ENCODE measurements at regions of chr12 and their contacts with region 1.

Region 1: DNA sequence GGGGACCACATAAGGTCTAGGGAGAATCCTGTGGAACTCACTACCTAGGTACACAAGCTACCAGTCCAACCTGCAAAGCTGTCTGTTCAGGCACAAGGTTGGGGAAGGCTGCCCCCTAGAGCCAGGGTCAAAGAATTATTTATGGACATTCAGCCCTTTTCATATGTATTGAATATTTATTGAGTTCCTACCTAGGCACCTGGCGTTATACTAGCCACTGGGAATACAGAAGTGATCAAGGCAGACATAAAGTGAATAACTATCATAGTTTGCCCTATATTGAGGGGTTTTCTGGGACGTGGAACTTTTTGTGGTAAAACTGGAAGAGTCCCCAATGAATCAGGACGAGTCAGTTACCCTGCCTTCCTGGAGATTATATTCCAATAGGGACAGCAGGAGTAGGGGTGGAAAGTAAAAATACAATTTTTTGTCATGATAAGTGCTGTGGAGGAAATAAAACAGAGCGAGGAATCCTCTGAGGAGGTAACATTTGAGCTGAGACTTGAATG is 5.8 kb upstream of the SLC48A1 start:
- DNase-seq: peak in 2 of 7 donors; percentile 57 to 67
- H3K4me3 ChIP-seq: no peak overlapping the region
- H3K27ac ChIP-seq: no peak overlapping the region
- H3K4me1 ChIP-seq: peaks cover 0 to 18% of the 10 kb centered on the region in 2 donors
- H3K27me3 ChIP-seq: no peaks in the 10 kb centered on the region
- CTCF ChIP-seq: peak; percentile 50 to 57 (median 55)
- POLR2A ChIP-seq: no peak

Region 2: DNA sequence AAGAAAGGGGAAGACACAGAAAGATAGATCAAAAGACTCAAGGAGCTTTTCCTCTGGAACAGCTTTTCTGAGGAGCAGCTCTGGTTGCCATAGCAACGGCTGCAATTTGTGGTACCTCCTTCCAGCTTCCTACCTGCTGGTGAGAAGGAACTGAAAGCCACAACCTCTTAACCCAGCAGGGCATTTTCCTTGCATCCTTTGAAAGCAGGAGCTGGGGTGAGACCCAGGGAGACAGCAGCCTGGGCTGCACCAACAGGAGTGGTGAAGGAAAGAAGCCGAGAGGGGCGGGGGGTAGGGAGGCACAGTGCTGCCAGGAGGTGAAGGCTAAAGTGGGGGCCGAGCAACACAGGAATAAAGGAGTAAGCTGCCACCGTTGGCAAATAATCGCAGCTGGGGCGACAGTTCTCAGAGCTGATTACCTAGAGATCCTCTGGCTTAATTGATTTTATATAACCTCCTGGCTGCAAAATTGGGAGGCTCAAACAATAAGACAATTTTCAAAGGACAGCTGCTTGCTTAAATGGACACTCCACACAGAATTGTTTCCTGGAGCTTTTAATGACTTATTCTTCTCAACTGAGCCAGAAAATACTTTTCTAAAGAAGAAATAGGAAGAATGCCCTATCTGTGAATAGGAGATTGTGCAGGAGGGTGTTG is 190.9 kb before region 1 on chr12:
- intact Hi-C with region 1: no loop called
- DNase-seq: no peak
- H3K4me3 ChIP-seq: no peak overlapping the region
- H3K27ac ChIP-seq: no peak overlapping the region
- H3K4me1 ChIP-seq: no peaks in the 10 kb centered on the region
- H3K27me3 ChIP-seq: no peaks in the 10 kb centered on the region
- CTCF ChIP-seq: no peak
- POLR2A ChIP-seq: no peak

Region 3: DNA sequence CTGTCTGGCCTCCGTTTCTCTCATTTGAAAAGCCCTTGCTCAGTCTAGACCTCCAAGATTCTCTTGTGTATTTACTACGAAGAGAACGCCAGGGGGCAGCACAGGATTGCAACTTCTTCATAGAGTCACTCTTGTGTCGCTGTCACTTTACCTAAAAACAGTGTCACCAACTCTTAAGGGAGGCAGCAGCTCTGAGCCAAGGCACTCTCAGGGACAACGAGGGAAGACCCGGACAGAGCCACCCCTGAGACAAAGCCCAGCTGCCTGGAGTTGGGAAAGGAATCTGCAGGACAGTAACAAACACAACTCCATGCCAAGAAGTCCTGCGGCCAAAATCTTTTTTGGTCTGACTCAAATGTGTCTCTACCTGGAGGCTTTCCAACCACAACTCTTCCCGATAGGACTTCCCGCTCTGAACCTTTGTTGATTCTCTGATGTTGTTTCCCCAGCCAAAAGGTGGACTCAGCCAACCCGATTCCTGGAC is 51.8 kb before region 1 on chr12:
- intact Hi-C with region 1: loop called (anchors 5 kb)
- DNase-seq: peak; percentile 80 to 93 (median 86)
- H3K4me3 ChIP-seq: no peak overlapping the region
- H3K27ac ChIP-seq: peak overlapping the region in 3 of 5 donors; percentile 63 to 82 (median 71)
- H3K4me1 ChIP-seq: peaks cover 24 to 37% of the 10 kb centered on the region in 2 donors
- H3K27me3 ChIP-seq: no peaks in the 10 kb centered on the region
- CTCF ChIP-seq: peak; percentile 60 to 93 (median 88)
- POLR2A ChIP-seq: no peak

Region 4: GRCh38 chr12:47721431-47721973 is 45.8 kb before region 1 on chr12:
- intact Hi-C with region 1: loop called in 1 of 2 experiments (anchors 5 kb)
- DNase-seq: peak in 1 of 7 donors; percentile 13
- H3K4me3 ChIP-seq: no peak overlapping the region
- H3K27ac ChIP-seq: no peak overlapping the region
- H3K4me1 ChIP-seq: peaks cover 13 to 19% of the 10 kb centered on the region in 2 donors
- H3K27me3 ChIP-seq: no peaks in the 10 kb centered on the region
- CTCF ChIP-seq: no peak
- POLR2A ChIP-seq: no peak

Region 5: DNA sequence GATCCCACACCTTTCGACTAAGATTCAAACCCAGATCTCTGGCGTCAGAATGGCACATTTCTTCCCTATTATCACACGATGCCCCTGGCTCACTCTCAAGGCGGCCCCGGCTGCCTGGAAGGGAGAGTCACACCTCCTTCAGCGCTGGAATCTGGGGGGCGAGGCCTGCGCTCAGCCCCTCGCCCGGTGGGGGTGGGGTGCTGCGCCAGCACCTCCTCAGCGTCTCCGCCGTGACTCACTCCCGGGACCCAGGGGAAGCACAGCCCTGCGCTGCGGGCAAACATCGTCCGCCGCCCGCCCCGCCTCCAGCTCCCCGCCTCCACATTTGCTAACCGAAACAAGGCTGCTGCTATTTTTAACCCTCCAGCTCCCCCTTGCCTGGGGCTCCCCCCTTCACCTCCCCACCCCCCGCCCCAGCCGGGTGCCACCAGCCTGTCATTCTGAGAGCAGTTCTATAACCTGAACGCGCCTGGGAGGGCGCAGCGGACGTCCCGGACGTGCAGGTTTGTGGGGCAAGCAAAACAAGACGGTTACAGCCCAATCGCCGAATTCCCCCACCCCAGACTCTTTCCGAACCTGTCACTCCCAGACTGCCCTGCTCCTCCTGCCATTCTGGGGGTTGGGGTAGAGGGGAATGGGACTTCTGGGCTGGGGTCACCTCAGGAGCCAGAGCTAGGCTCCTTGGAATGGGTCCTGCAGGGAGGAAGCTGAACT is 45.7 kb after region 1 on chr12:
- intact Hi-C with region 1: no loop called
- DNase-seq: peak; percentile 91 to 96 (median 94)
- H3K4me3 ChIP-seq: peak overlapping the region in 2 of 4 donors; percentile 18 to 51
- H3K27ac ChIP-seq: peak overlapping the region; percentile 69 to 98 (median 96)
- H3K4me1 ChIP-seq: peaks cover 94 to 100% of the 10 kb centered on the region in 2 donors
- H3K27me3 ChIP-seq: no peaks in the 10 kb centered on the region
- CTCF ChIP-seq: no peak
- POLR2A ChIP-seq: peak; percentile 29 to 57

Region 6: DNA sequence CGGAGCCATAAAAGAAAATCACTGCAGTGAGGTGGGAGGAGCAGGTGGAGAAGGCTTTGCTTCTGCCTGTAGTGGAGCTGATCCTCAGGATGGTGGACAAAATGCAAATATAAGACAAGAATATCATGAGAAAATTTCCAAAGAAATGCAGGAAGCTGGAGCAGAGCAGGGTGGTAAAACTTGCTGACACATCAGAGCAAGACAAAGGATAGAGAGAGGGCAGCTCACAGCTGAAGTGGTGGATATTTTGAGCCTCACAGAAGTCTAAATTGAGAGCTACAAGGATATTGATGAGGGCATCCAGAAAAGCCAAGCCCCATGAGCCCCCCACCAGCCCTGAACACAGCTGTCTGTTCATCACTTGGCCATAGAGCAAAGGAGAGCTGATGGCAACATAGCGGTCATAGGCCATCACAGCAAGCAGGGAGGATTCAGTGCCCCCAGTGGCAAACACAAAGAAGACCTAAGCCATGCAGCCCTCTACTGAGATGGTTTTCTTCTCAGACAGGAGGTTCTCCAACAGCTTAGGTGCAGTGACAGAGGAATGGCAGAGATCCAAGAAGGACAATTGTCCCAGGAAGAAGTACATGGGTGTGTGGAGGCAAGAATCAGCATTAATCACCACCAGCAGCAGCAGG is 675.0 kb after region 1 on chr12:
- intact Hi-C with region 1: no loop called
- DNase-seq: no peak
- H3K4me3 ChIP-seq: no peak overlapping the region
- H3K27ac ChIP-seq: peak overlapping the region in 1 of 5 donors; percentile 68
- H3K4me1 ChIP-seq: peaks cover 8 to 29% of the 10 kb centered on the region in 2 donors
- H3K27me3 ChIP-seq: no peaks in the 10 kb centered on the region
- CTCF ChIP-seq: no peak
- POLR2A ChIP-seq: no peak

Measured in adrenal gland (tissue), 19 donors.